ENCODE measurements at regions of chr15 and their contacts with region 1.

Region 1: DNA sequence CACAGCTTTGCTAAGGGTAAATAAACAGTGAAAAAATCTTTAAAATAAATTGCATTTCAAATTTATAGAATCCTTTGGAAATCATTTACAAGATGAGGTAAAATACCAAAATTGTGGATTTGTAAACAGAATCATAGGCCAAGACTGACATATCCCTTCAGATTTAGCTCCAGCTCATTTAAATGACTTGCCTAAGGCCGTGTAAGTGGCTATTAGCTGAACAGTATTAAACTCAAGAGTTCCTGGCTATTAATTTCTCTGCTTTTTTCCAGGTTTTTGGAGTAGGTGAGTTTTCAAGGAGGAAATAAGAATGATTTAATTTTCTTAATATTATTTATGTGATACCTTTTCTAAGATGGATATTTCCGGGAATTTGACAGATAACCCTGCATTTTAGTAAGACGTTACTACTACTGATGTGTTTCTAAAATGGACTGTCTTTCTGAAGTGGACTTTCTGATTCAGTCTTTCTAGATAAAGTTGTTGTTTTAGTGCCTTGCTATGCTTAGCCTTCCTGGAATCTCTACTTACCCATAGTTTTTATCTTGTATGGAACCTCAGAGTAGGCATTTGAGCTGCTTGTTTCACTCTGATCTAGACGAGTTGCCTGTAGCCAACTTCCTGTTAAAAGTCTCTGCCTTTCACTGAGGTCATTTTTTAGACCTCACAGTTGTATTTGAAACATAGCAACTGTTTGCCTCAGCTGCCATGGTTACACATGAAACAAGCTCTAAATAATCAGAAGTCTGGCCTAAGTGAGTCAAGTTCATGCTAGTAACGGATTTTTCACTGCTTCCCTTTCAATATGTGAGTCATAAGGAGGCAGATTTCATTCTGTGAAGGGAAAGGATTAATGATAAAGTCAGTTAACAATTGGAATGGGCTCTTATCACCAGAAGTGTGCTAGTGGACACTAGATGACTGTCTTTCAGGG is 127.0 kb downstream of the KLHL25 start:
- DNase-seq: peak; percentile 78
- H3K4me3 Mint-ChIP-seq: no peak overlapping the region
- H3K27ac Mint-ChIP-seq: peak overlapping the region; percentile 93
- H3K4me1 Mint-ChIP-seq: peaks cover 26% of the 10 kb centered on the region
- H3K27me3 Mint-ChIP-seq: no peaks in the 10 kb centered on the region

Region 2: DNA sequence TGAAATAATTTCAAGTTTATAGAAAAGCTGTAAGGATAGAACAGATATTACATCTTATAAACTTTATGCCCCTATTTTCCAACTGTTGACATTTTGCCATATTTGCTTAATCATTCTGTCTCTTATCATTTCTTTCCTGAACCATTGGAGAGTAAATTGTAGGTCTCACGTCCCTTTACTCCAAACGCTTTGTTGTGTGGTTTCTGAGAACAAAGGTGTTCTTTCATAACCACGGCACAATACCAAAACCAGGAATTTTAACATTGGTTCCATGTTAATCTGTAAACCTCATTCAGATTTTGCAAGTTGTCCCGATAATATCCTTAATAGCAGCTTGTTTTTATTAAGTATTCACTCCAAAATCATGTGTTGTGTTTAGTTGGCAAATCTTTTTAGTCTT is 152.5 kb before region 1 on chr15:
- CTCF ChIA-PET with region 1: no interaction called
- intact Hi-C with region 1: no loop called
- DNase-seq: no peak
- H3K4me3 Mint-ChIP-seq: no peak overlapping the region
- H3K27ac Mint-ChIP-seq: no peak overlapping the region
- H3K4me1 Mint-ChIP-seq: peaks cover 36% of the 10 kb centered on the region
- H3K27me3 Mint-ChIP-seq: no peaks in the 10 kb centered on the region

Region 3: DNA sequence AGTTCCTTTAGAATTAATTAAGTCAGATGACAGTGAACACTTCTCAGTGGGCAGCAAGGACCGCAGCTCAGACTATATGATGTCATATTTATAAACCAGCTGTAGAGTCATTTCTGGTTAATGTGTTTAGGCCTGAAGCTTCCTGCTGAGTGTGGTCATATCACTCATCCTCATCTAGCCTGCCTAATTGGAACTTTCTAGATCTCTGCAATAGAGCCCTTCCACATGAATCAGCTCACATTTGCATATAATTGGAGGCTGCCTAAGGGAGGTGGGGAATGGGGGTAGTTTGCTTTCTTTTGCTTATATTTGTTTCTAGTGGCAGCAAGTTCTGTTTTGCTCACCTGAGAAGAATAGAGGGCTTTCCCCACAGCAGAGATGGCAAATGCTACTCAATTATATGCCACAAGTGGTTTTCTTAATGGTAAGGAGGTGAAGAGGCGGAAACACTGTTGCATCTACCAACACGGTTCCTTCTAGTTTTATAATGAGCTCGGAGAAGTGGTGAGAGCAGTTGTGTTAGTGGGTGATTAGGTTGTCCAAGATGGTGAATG is 21.1 kb before region 1 on chr15:
- CTCF ChIA-PET with region 1: interaction called, 3 read pairs
- intact Hi-C with region 1: loop called (anchors 1 kb)
- DNase-seq: peak; percentile 21
- H3K4me3 Mint-ChIP-seq: no peak overlapping the region
- H3K27ac Mint-ChIP-seq: peak overlapping the region; percentile 52
- H3K4me1 Mint-ChIP-seq: peaks cover 46% of the 10 kb centered on the region
- H3K27me3 Mint-ChIP-seq: no peaks in the 10 kb centered on the region

Region 4: DNA sequence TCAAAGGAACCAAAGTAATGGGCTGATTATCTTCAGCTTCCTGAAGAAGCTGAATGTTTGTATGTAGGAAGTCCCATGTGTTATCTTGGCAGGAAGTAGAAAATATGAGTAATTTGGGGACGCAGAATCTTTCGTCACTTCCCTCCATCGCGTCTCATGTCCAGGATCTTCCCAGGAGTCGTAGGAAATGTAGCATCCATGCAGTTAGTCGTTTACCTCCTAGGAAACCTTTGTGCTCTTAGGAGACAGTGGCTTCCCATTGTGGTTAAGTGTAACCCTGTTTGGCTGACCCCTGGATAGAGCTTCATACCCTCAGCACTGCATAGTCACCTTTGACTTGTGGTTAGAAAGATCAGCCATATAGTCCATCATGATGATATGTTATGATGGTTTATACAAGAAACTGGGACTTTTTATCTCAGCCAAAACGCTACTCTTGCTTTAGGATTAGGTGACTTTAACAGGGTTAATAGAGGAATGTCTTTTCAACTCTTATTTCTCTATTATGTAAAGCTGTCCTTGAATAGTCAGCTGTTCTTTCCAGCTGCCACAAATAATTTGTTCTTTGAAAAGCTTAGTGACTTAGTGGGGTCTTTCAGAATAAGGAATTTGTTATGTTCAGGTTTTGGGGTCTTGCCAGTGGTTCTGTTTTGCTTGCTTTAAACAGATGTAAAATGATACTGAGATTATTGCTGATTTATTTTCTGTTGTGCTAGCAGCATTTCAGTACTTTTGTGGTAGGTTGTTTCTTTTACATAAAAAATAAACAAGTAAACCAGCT is 34.8 kb after region 1 on chr15:
- CTCF ChIA-PET with region 1: interaction called, 3 read pairs
- intact Hi-C with region 1: loop called (anchors 1 kb)
- DNase-seq: peak; percentile 56
- H3K4me3 Mint-ChIP-seq: peak overlapping the region; percentile 58
- H3K27ac Mint-ChIP-seq: peak overlapping the region; percentile 98
- H3K4me1 Mint-ChIP-seq: peaks cover 71% of the 10 kb centered on the region
- H3K27me3 Mint-ChIP-seq: no peaks in the 10 kb centered on the region

Region 5: DNA sequence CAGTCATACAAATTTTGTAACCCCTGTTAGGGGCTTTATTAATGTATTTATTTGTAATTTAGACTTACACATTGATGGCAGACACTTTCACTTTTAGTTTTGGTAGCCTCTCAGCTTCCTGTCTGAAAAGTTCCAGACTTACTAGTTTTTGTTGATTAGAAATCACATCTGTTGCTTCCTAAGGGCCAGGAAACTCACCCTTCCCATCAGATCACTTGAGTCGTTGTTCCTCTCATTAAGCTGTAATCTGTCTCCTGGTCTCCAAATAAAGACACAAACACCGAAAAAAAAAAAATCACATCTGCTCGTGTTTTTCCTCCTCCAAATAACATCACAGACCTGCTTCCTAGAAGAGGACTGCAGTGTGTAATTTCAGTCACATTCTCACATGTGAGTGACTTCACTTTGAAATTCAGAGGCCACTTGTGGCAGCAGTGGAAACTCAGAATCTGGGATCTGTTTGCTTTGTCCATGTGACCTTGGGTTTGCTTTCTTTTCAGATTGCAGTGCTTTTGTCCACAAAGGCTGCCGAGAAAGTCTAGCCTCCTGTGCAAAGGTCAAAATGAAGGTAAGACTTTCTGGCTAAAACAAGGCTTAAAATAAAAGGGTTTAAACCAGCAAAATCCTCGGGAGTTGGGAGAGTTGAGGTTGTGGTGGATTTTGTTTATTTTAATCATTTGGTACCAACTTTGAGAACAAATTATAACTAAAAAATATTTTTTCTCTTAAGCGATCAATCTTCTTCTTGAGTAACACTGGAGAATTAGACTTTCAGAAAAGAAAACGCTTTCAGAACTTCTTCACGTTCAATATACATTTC is 40.0 kb after region 1 on chr15:
- CTCF ChIA-PET with region 1: interaction called, 3 read pairs
- intact Hi-C with region 1: loop called (anchors 1 kb)
- DNase-seq: peak; percentile 51
- H3K4me3 Mint-ChIP-seq: peak overlapping the region; percentile 79
- H3K27ac Mint-ChIP-seq: peak overlapping the region; percentile 99
- H3K4me1 Mint-ChIP-seq: peaks cover 87% of the 10 kb centered on the region
- H3K27me3 Mint-ChIP-seq: no peaks in the 10 kb centered on the region